ENCODE measurements at regions of chr5 and their contacts with region 1.

Region 1: DNA sequence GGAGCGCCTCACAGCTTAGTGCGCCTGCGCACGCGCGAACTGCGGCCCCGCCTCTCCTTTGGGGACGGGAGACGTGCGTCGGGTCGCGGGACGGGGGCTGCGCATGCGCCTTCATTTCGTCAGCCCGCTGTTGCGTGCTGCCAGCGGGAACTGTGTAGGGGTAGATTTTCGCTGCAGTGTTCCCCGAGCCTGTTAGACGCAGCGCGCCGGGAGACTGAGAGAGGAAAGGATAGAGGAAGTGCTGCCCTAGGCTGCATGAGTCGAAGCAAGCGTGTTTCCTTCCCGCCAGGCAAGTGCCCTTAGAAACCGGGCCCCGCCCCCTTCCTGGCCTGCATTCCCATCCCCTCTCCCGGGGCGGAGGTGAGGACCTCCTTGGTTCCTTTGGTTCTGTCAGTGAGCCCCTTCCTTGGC is 12.3 kb downstream of the ITGA1 start:
- DNase-seq: peak; percentile 96
- H3K4me3 Mint-ChIP-seq: peak overlapping the region; percentile 88
- H3K27ac Mint-ChIP-seq: peak overlapping the region; percentile 96
- H3K4me1 Mint-ChIP-seq: peaks cover 49% of the 10 kb centered on the region
- H3K27me3 Mint-ChIP-seq: no peaks in the 10 kb centered on the region

Region 2: GRCh38 chr5:52709171-52709925 is 90.6 kb before region 1 on chr5:
- CTCF ChIA-PET with region 1: interaction called, 4 read pairs
- POLR2A ChIA-PET with region 1: interaction called, 5 read pairs
- intact Hi-C with region 1: loop called (anchors 5 kb)
- DNase-seq: peak; percentile 31
- H3K4me3 Mint-ChIP-seq: no peak overlapping the region
- H3K27ac Mint-ChIP-seq: peak overlapping the region; percentile 35
- H3K4me1 Mint-ChIP-seq: peaks cover 36% of the 10 kb centered on the region
- H3K27me3 Mint-ChIP-seq: no peaks in the 10 kb centered on the region

Region 3: DNA sequence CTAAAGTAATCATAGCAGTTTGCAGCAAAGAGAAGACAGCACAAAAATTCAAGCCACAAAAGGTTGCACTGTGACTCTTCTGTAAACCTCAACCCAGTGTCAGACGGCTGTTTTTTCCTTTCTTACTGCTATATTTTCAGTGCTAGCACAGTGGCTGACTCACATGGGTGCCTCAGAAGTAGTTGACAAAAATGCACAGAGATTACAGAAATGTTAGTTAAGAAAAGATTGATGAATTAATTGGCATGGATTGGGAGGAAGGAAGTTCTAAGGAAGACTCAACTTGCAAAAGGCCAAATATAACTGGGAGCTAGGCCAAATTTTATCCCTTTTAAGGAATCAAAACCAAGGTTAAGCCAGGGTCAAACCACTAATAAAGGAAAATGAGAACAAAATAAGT is 56.0 kb before region 1 on chr5:
- CTCF ChIA-PET with region 1: no interaction called
- POLR2A ChIA-PET with region 1: no interaction called
- intact Hi-C with region 1: loop called (anchors 1 kb)
- DNase-seq: peak; percentile 55
- H3K4me3 Mint-ChIP-seq: no peak overlapping the region
- H3K27ac Mint-ChIP-seq: peak overlapping the region; percentile 23
- H3K4me1 Mint-ChIP-seq: peaks cover 41% of the 10 kb centered on the region
- H3K27me3 Mint-ChIP-seq: no peaks in the 10 kb centered on the region

Region 4: DNA sequence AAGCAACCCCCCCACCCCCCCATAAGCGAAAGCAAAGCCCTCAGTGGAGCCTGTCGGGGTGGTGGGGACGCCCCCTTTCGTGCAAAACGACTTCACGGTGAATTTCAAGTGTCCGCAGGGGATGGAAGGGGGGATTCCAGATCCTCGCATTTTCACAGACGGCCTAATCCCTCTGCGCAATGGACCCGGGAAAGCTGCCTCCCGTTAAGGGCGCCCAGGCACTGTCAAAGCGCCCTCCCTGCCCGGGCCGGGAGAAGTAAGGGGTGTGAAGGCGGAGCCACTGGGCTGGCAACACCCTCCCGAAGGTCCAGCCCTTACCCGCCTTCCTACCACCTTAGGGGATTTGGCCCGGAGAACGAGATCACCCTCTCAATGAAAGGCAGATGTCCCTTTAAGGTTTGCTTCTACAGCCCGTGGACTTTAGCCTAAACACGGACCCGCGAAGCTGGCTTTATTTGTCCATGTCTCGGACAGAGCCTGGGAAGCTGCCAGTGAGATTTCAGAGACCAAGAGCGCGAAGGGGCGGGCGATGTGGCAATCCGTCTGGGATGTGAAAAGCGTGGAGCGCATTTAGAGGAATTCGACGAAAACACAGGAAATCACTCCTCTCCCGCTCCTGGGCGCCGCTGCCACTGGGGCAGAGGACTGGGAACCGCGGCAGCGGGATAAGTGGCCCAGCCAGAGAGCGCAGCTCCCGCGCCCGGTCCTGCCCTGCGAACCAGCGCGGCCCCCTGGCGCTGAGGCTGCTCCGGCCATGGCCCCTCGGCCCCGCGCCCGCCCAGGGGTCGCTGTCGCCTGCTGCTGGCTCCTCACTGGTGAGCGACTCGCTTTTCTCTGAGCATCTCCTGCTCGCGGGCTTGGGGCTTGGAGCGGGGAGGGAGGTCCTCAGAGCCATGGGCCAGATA is 12.1 kb before region 1 on chr5 and contains the starts of genes ITGA1 and PELO:
- CTCF ChIA-PET with region 1: interaction called, 11 read pairs
- POLR2A ChIA-PET with region 1: interaction called, 12 read pairs
- intact Hi-C with region 1: loop called (anchors 1 kb)
- DNase-seq: peak; percentile 61
- H3K4me3 Mint-ChIP-seq: peak within 1 kb of the TSS; percentile 82
- H3K27ac Mint-ChIP-seq: peak within 1 kb of the TSS; percentile 43
- H3K4me1 Mint-ChIP-seq: peaks cover 18% of the 10 kb centered on the region
- H3K27me3 Mint-ChIP-seq: peaks cover 8% of the 10 kb centered on the region
- total RNA-seq, gene ITGA1: 0.62 to 1.3 TPM
- total RNA-seq, gene PELO: 15.1 to 16.2 TPM

Region 5: DNA sequence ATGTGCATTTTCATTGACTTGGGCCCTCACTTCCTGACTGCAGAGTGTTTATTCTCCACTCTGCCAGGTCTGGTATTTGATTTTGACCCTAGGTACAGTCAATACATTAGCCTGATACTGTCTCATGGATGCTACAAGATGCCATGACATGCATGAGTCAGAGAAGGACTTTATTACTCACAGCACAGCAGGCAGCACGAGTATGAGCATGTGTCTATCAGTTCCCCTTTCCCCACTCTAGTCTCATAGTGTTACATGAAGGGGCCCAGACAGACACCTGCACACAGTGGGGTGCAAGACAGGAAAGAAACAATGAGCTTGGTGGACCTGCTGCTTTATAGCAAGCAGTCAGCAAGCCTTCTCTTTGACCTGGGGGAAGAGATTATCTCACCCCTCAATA is 208.8 kb after region 1 on chr5:
- CTCF ChIA-PET with region 1: no interaction called
- POLR2A ChIA-PET with region 1: no interaction called
- intact Hi-C with region 1: loop called (anchors 5 kb)
- DNase-seq: peak; percentile 73
- H3K4me3 Mint-ChIP-seq: no peak overlapping the region
- H3K27ac Mint-ChIP-seq: peak overlapping the region; percentile 55
- H3K4me1 Mint-ChIP-seq: peaks cover 61% of the 10 kb centered on the region
- H3K27me3 Mint-ChIP-seq: peaks cover 4% of the 10 kb centered on the region

Region 6: DNA sequence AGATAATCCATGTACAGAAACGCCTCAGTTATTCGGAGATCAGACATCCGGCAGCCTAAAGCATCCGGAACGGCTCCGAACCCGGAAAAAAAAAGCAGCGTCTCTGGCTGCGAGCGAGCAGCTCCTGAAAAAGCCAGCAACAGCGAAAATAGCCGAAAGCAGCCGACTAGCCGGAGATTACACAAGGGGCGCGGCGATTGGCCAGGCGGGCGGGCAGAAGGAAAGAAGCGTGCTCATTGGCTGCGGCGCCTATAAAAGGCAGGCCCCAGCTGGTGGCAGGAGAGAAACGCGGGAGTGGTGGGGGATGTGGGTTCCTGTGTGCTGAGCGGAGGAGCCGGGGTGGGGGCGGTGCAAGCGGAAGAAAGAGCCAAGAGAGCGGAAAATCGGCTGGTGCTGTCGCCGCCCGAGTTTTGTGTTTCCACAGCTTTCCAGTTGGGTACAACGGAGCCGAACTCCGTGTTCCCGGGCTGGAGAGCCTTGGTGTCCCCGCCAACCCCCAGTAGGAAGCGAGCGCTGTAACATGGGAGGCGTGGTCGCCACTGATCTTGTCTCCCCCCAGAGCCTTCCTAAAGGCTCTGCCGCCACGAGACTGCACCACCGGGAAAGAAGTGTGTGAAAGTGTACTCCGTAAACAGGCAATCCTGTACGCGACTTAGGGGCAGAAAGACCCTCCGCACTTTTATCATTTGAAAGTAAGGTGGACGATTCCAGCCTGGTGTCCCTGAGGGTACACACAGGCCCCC is 1510.6 kb after region 1 on chr5 and contains the start of gene ARL15:
- CTCF ChIA-PET with region 1: no interaction called
- POLR2A ChIA-PET with region 1: no interaction called
- intact Hi-C with region 1: loop called (anchors 2 kb)
- DNase-seq: peak; percentile 98
- H3K4me3 Mint-ChIP-seq: peak within 1 kb of the TSS; percentile 86
- H3K27ac Mint-ChIP-seq: peak within 1 kb of the TSS; percentile 89
- H3K4me1 Mint-ChIP-seq: peaks cover 25% of the 10 kb centered on the region
- H3K27me3 Mint-ChIP-seq: peaks cover 3% of the 10 kb centered on the region
- total RNA-seq, gene ARL15: 4.5 to 5.5 TPM